A549 (cell line): ENCODE measurements at regions of chr6 and their contacts with region 1.

Region 1: GRCh38 chr6:10451828-10452509 is 37.1 kb upstream of the TFAP2A start:
- DNase-seq: peak; percentile 81 to 98
- ATAC-seq: peak; percentile 98 to 100
- H3K4me3 ChIP-seq: no peak overlapping the region
- H3K27ac ChIP-seq: peak overlapping the region; percentile 88 to 99
- H3K4me1 ChIP-seq: peaks cover 35% of the 10 kb centered on the region
- CTCF ChIP-seq: no peak
- EP300 ChIP-seq: peak; percentile 66 to 82; a peak in 3 of 5 replicates
- POLR2A ChIP-seq: no peak
- RAD21 ChIP-seq: peak in 1 of 2 experiments; percentile 24; a peak in 1 of 5 replicates

Region 2: GRCh38 chr6:10441004-10441662 is 10.8 kb before region 1 on chr6:
- CTCF ChIA-PET with region 1: interaction called, 3 read pairs
- POLR2A ChIA-PET with region 1: interaction called, 14 read pairs
- DNase-seq: peak; percentile 84 to 98
- ATAC-seq: peak; percentile 95 to 98
- H3K4me3 ChIP-seq: no peak overlapping the region
- H3K27ac ChIP-seq: peak overlapping the region; percentile 92 to 97
- H3K4me1 ChIP-seq: peaks cover 27% of the 10 kb centered on the region
- CTCF ChIP-seq: no peak
- EP300 ChIP-seq: peak; percentile 83 to 94; a peak in 3 of 5 replicates
- POLR2A ChIP-seq: no peak
- RAD21 ChIP-seq: peak; percentile 18 to 35; a peak in 3 of 5 replicates